ENCODE measurements at regions of chr3 and their contacts with region 1.

Region 1: GRCh38 chr3:125003369-125003853 is 52.4 kb downstream of the HEG1 start:
- DNase-seq: no peak
- H3K4me3 Mint-ChIP-seq: no peak overlapping the region
- H3K27ac Mint-ChIP-seq: no peak overlapping the region
- H3K4me1 Mint-ChIP-seq: peaks cover 35% of the 10 kb centered on the region
- H3K27me3 Mint-ChIP-seq: no peaks in the 10 kb centered on the region

Region 2: GRCh38 chr3:125025642-125026041 is 22.2 kb after region 1 on chr3:
- CTCF ChIA-PET with region 1: interaction called, 4 read pairs
- intact Hi-C with region 1: loop called (anchors 2 kb)
- DNase-seq: no peak
- H3K4me3 Mint-ChIP-seq: no peak overlapping the region
- H3K27ac Mint-ChIP-seq: no peak overlapping the region
- H3K4me1 Mint-ChIP-seq: peaks cover 43% of the 10 kb centered on the region
- H3K27me3 Mint-ChIP-seq: no peaks in the 10 kb centered on the region

Measured in activated naive CD4-positive, alpha-beta T cell treated with anti-CD3 and anti-CD28 coated beads for 36 hours (primary cell).